ENCODE measurements at regions of chr5 and their contacts with region 1.

Region 1: DNA sequence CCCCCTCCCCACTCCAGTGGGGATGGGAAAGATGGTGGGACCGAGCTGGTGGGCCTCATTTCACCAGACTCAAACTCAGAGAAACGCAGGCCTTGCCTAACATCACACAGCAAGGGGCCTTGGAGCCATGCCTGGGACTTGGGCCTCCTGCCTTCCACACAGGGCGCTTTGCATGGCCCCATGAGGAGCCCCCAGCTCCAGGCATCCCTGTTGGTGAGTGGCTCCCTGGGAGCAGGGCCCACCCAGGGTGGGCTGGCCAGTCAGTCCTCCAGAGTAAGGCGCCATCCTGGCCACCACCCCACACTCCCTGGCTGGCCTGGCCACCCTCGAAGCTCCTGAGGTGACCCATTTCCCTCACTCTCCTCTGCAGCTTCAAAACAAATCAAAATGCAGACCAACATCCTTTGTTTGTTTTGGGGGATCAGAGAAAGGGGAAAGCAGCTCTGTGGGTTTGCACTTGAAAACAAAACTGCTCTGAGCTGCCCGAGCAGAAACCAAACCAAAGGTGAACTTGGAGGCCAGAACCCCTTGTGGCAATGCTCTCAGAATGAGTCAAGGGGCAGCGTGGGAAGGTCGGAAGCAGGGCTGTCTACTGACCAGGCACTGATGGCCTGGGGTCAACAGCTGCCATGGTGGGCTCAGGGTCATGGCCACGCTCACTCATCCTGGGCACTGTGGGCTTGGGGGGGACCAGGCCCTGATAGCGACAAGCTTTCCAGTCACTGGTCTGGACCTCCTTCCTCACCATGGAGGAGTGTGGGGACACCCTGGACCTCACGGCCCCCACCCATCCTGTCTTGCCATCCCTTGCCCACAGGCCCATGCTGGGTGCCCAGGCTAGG is 37.0 kb upstream of the VDAC1 start:
- DNase-seq: peak; percentile 41
- ATAC-seq: peak; percentile 32
- H3K4me3 Mint-ChIP-seq: no peak overlapping the region
- H3K27ac Mint-ChIP-seq: no peak overlapping the region
- H3K4me1 Mint-ChIP-seq: peaks cover 32% of the 10 kb centered on the region
- H3K27me3 Mint-ChIP-seq: no peaks in the 10 kb centered on the region
- CTCF ChIP-seq: no peak

Region 2: DNA sequence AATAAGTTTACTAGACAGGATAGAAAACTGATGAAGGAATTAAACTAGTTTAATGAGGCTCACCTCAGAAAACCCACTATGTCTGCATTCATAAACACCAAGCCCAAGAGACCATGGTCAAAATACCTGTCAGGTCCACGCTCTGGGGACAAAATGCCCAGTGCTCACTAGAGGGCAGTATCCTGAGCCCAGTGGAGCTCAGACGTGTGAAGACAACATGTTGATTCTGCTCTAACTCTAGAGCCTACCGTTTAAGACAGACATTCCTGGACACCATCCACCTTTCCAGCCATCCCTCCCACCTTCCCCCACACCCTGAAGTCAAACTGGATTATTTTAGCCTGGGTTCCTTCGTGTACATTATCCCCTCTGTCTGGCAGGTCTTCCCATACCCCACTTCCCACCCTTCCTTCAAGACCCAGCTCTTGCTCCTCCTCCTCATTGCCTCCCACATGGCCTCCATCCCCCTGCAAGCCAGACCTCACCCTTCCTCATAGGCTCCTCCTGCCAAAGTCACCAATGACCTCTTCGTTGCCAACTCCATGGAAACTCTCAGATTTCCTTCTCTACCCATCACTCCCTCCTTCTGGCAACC is 287.1 kb before region 1 on chr5:
- CTCF ChIA-PET with region 1: no interaction called
- POLR2A ChIA-PET with region 1: no interaction called
- intact Hi-C with region 1: no loop called
- DNase-seq: peak; percentile 53
- ATAC-seq: peak; percentile 66
- H3K4me3 Mint-ChIP-seq: no peak overlapping the region
- H3K27ac Mint-ChIP-seq: no peak overlapping the region
- H3K4me1 Mint-ChIP-seq: peaks cover 4% of the 10 kb centered on the region
- H3K27me3 Mint-ChIP-seq: peaks cover 15% of the 10 kb centered on the region
- CTCF ChIP-seq: peak; percentile 61

Region 3: DNA sequence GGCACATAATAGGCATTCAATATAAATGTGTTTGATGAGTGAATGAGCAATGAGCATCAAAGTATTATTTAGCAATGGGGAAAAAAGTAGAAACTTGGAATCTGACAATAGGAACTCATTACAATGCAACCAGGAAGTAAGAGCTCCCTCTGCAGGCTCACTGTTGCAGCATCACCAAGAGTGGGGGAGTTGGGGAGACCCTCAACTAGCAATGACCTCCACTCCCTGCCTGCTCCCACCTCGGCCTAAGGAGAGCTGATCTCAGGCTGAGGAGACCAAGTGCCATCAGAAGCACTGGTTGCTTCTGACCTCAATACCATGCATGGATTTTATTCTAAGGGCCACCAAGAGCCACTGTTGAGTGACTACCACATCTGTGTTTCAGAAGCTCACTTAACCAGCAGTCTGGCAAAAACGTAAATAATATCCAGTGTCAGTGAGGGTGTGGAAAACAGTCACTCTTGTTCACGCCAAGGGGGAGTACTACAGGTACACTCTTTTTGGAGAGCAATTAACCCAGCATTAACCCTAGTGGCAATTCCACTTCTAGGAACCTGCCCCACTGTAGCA is 45.0 kb before region 1 on chr5:
- CTCF ChIA-PET with region 1: interaction called, 11 read pairs
- POLR2A ChIA-PET with region 1: no interaction called
- intact Hi-C with region 1: no loop called
- DNase-seq: no peak
- ATAC-seq: no peak
- H3K4me3 Mint-ChIP-seq: no peak overlapping the region
- H3K27ac Mint-ChIP-seq: no peak overlapping the region
- H3K4me1 Mint-ChIP-seq: peaks cover 66% of the 10 kb centered on the region
- H3K27me3 Mint-ChIP-seq: no peaks in the 10 kb centered on the region
- CTCF ChIP-seq: peak; percentile 65

Region 4: GRCh38 chr5:134026521-134027268 is 15.1 kb before region 1 on chr5:
- CTCF ChIA-PET with region 1: interaction called, 44 read pairs
- POLR2A ChIA-PET with region 1: interaction called, 3 read pairs
- intact Hi-C with region 1: no loop called
- DNase-seq: peak; percentile 73
- ATAC-seq: peak; percentile 99
- H3K4me3 Mint-ChIP-seq: no peak overlapping the region
- H3K27ac Mint-ChIP-seq: no peak overlapping the region
- H3K4me1 Mint-ChIP-seq: no peaks in the 10 kb centered on the region
- H3K27me3 Mint-ChIP-seq: no peaks in the 10 kb centered on the region
- CTCF ChIP-seq: peak; percentile 43

Region 5: DNA sequence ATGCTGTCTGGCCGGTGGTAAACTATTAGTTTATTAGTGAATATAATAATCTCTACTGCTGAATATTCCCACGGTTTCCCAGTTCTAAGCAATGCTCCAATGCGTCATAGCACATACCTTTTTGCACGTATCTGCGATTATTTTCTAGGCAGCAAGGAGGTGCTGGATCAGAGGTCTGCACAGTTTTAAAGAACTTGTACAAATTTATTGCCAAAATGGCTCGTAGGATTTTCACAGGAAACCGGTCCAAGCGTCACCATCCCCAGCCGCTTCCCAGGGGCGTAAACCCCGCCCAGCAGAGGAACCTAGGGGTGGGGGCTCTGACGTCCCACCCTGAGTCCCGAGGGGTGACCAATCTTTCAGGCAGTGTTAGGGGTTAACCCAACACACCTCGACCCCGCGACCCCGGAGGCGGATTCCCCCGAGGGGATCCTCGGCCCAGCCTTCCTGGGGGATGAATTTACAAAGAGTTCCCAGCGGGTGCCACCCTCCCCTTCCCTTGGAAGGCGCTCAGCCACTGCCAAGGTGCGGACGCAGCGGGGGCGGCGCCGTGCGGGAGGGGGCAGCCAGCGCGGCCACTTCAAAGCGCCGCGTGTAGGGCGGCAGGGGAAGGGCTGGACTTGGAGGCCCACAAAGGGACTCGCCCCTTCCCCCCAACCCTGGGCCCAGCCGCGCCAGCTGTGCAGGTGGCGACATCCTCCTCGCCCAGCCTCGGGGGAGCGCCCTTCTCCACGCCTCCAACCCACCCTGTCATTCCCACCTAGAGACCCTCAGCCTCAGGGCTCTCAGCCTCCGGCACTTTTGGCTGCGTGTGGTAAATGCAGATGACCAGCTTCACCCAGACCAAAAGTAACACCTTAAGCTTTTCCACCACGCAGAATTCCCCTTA is 29.2 kb after region 1 on chr5:
- CTCF ChIA-PET with region 1: interaction called, 75 read pairs
- POLR2A ChIA-PET with region 1: interaction called, 5 read pairs
- intact Hi-C with region 1: no loop called
- DNase-seq: peak; percentile 69
- ATAC-seq: peak; percentile 55
- H3K4me3 Mint-ChIP-seq: peak overlapping the region; percentile 64
- H3K27ac Mint-ChIP-seq: peak overlapping the region; percentile 89
- H3K4me1 Mint-ChIP-seq: peaks cover 65% of the 10 kb centered on the region
- H3K27me3 Mint-ChIP-seq: no peaks in the 10 kb centered on the region
- CTCF ChIP-seq: no peak

Region 6: DNA sequence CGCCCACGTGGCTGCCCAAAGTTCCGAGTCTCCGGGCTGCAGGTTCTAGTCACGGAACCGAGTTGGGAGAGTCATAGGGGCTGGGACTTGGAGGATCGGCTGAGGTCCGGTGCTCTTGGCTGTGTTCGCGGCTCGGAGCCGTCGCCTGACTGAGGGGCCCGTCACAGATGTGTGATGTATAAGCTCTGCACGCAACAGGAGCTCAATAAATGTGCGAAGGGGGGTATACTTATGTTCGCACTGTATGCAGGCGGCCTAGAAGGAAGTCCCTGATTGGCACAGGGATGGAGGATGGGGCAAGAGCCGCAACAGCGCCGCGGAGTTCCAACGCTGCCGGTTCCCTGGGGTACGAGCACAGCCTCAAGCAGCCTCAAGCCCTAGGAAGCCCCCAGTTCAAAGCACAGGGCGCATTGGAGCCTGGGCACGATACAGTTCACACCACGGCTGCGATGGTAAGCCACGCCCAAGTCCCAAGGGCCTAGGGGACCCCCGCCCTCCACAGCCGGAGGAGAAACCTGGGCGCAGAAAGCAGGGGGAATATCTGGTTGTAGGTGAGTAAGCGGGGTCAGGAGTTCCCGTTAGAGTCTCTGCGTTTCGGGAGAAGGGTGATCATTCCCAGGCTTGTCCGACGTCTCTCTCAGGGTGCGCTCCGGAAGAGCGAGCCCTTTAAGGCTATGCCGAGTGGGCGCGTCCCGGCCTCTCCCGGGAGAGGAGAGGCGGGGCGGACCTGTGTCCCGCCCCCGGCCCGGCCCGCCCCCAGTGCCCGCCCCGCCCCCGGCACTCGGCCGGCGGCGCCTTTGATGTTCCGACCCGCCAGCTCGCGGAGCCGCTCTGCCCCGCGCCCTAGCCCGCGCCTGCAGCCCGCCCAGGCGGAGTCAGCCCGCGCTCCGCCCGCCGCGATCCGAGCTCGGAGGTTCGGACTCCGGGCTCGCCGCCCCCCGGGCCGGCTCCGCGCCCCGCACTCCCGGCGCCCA is 72.4 kb after region 1 on chr5 and contains the start of gene TCF7:
- CTCF ChIA-PET with region 1: interaction called, 166 read pairs
- POLR2A ChIA-PET with region 1: interaction called, 17 read pairs
- intact Hi-C with region 1: no loop called
- DNase-seq: peak; percentile 79
- ATAC-seq: peak; percentile 53
- H3K4me3 Mint-ChIP-seq: peak within 1 kb of the TSS; percentile 73
- H3K27ac Mint-ChIP-seq: peak within 1 kb of the TSS; percentile 84
- H3K4me1 Mint-ChIP-seq: peaks cover 66% of the 10 kb centered on the region
- H3K27me3 Mint-ChIP-seq: no peaks in the 10 kb centered on the region
- CTCF ChIP-seq: no peak
- total RNA-seq, gene TCF7: 47.4 to 50.3 TPM

Region 7: GRCh38 chr5:134145779-134146581 is 104.2 kb after region 1 on chr5:
- CTCF ChIA-PET with region 1: interaction called, 1,049 read pairs
- POLR2A ChIA-PET with region 1: interaction called, 43 read pairs
- intact Hi-C with region 1: no loop called
- DNase-seq: peak; percentile 91
- ATAC-seq: peak; percentile 88
- H3K4me3 Mint-ChIP-seq: no peak overlapping the region
- H3K27ac Mint-ChIP-seq: peak overlapping the region; percentile 70
- H3K4me1 Mint-ChIP-seq: peaks cover 51% of the 10 kb centered on the region
- H3K27me3 Mint-ChIP-seq: no peaks in the 10 kb centered on the region
- CTCF ChIP-seq: peak; percentile 95

Region 8: DNA sequence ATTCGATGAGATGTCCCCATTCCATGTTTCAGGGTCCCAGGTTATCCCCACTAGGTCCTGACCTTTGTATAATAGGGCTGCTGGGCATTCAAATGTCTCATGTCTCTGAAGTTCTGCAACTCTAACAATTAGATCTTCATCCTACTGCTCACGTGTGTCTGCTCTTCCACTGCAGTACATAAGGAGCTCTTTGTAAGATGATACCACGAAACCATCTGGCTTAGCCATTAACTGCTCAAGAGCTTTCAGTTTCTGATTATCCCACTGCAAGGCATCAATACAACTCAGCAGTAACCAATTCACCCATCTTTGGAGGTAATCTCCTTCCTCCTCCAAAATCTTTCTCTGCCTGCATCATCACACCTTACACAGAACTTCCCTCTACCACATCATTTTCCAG is 234.0 kb after region 1 on chr5:
- CTCF ChIA-PET with region 1: interaction called, 3 read pairs
- POLR2A ChIA-PET with region 1: no interaction called
- intact Hi-C with region 1: loop called (anchors 10 kb)
- DNase-seq: no peak
- ATAC-seq: no peak
- H3K4me3 Mint-ChIP-seq: no peak overlapping the region
- H3K27ac Mint-ChIP-seq: no peak overlapping the region
- H3K4me1 Mint-ChIP-seq: no peaks in the 10 kb centered on the region
- H3K27me3 Mint-ChIP-seq: peaks cover under 1% of the 10 kb centered on the region
- CTCF ChIP-seq: no peak

Region 9: DNA sequence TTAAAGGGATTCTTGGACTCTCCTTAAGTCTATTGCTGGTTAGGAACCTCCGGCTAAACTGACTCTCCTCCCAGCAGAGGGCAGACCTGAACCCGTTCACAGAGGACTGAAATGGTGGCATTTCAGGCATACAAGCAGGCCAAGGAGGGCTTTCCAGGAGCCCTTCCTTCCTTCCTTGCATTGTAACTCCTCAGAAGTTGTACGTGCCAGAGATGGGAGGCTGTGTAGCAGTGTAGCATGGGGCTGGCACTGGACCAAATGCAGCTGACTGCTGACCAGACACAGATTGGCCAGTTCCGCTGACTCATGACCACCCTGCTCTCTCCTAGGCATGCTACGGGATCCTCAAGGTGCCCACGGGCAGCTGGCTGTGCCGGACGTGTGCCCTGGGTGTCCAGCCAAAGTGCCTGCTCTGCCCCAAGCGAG is 520.1 kb after region 1 on chr5:
- CTCF ChIA-PET with region 1: no interaction called
- POLR2A ChIA-PET with region 1: no interaction called
- intact Hi-C with region 1: no loop called
- DNase-seq: peak; percentile 29
- ATAC-seq: no peak
- H3K4me3 Mint-ChIP-seq: no peak overlapping the region
- H3K27ac Mint-ChIP-seq: peak overlapping the region; percentile 82
- H3K4me1 Mint-ChIP-seq: peaks cover 10% of the 10 kb centered on the region
- H3K27me3 Mint-ChIP-seq: no peaks in the 10 kb centered on the region
- CTCF ChIP-seq: no peak